Gastrocnemius medialis (tissue), 4 donors: ENCODE measurements at regions of chr18 and their contacts with region 1.

Region 1: GRCh38 chr18:26103579-26103978 is 13.2 kb upstream of the SS18 start:
- DNase-seq: no peak
- ATAC-seq: no peak
- H3K4me3 ChIP-seq: no peak overlapping the region
- H3K27ac ChIP-seq: no peak overlapping the region
- H3K4me1 ChIP-seq: no peaks in the 10 kb centered on the region
- H3K27me3 ChIP-seq: no peaks in the 10 kb centered on the region
- CTCF ChIP-seq: no peak
- POLR2A ChIP-seq: no peak

Region 2: DNA sequence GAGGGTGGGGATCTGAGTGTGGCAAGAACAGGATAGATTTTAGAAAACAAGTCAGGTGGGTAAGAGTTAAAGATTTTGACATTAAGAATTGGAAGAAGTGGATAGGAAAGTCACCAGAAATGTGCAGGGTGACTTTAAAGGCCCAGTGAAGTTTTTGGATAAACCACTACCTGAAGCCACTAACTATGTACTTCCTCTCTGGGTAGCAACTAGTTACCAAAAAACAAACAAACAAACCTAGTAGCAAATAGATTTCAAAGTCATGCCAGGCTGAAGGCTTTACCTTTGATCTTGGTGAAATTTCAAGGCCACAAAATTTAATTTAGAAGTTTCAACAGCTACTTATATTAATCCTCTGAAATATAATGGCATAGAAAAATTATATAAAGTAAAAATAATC is 72.6 kb after region 1 on chr18:
- in situ Hi-C with region 1: no loop called
- intact Hi-C with region 1: loop called (anchors 2 kb)
- DNase-seq: no peak
- ATAC-seq: no peak
- H3K4me3 ChIP-seq: no peak overlapping the region
- H3K27ac ChIP-seq: no peak overlapping the region
- H3K4me1 ChIP-seq: no peaks in the 10 kb centered on the region
- H3K27me3 ChIP-seq: no peaks in the 10 kb centered on the region
- CTCF ChIP-seq: no peak
- POLR2A ChIP-seq: no peak